Breast epithelium (tissue), 4 donors: ENCODE measurements at regions of chr13 and their contacts with region 1.

Region 1: DNA sequence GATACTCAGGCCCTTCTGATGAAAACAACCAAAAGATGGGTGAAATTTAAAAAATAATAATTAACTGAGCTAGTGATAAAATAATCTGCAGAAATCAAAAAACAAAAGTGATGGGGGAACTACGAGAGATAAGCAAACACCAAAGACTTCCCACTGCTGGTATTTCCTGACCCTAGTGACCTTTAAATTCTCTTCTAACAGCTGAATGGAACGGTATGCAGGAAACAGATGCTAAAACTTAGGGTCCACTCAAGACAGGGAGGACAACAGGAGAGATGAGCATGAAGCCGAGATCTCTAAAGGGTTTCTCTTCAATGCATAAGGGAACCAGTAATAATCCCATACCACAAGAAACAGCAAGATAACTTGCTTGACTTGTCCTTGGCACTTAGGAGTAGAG is 50.8 kb downstream of the USP12 start:
- DNase-seq: no peak
- H3K4me3 ChIP-seq: no peak overlapping the region
- H3K27ac ChIP-seq: peak overlapping the region in 1 of 2 donors; percentile 44
- H3K4me1 ChIP-seq: no peaks in the 10 kb centered on the region
- H3K27me3 ChIP-seq: no peaks in the 10 kb centered on the region
- CTCF ChIP-seq: no peak
- POLR2A ChIP-seq: no peak

Region 2: DNA sequence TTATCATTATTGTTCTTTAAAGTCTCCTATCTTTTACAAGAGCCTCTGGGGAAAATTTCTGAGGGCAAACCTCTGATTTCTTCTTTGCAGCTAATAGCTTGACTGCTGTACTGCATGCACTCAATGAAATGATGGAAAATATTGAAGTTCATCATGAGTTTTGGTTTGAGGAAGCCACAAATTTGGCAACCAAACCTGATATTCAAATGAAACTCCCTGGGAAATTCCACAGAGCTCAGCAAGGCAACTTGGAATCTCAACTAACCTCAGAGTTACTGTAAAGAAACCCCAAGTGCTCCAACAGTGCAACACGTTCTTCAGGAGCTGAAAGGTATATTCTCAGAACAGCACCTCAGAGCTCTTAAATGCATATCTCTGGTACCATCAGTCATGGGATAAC is 884.5 kb before region 1 on chr13:
- intact Hi-C with region 1: no loop called
- DNase-seq: no peak
- H3K4me3 ChIP-seq: no peak overlapping the region
- H3K27ac ChIP-seq: no peak overlapping the region
- H3K4me1 ChIP-seq: no peaks in the 10 kb centered on the region
- H3K27me3 ChIP-seq: no peaks in the 10 kb centered on the region
- CTCF ChIP-seq: no peak
- POLR2A ChIP-seq: no peak

Region 3: DNA sequence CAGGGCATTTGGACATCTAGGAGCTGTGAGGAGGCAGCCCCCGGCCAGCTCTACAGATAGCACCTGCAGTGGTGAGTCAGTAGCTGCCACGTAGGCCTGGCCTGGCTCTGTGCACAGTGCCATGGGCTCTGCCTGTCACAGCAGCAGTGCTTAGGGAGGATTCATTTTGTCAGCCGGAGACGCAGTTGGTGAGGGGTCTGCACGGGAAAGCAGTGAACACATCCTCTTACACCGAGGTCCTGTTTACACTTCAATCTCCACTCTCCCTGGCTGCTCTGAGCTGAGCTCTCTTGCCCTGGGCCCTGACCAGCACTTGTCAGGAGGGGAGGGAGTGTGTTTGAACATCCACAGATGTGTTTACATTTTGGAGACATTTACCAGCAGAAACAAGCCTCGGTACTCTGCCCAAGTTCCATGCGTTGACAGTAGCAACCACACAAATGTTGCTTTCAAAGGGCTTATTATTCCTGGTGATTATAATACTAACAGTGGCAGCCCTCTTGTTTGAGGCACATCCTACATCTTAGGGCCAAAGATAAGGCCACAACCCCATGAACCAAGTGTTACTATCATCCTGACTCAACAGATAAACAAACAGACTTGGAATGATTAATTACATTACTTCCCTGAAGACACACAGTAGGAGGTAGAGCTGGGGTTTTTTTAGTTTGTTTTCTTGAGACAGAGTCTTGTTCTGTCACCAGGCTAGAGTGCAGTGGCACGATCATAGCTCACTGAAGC is 98.1 kb before region 1 on chr13:
- intact Hi-C with region 1: no loop called
- DNase-seq: peak in 1 of 2 donors; percentile 60
- H3K4me3 ChIP-seq: no peak overlapping the region
- H3K27ac ChIP-seq: peak overlapping the region in 1 of 2 donors; percentile 36
- H3K4me1 ChIP-seq: no peaks in the 10 kb centered on the region
- H3K27me3 ChIP-seq: no peaks in the 10 kb centered on the region
- CTCF ChIP-seq: no peak
- POLR2A ChIP-seq: no peak

Region 4: DNA sequence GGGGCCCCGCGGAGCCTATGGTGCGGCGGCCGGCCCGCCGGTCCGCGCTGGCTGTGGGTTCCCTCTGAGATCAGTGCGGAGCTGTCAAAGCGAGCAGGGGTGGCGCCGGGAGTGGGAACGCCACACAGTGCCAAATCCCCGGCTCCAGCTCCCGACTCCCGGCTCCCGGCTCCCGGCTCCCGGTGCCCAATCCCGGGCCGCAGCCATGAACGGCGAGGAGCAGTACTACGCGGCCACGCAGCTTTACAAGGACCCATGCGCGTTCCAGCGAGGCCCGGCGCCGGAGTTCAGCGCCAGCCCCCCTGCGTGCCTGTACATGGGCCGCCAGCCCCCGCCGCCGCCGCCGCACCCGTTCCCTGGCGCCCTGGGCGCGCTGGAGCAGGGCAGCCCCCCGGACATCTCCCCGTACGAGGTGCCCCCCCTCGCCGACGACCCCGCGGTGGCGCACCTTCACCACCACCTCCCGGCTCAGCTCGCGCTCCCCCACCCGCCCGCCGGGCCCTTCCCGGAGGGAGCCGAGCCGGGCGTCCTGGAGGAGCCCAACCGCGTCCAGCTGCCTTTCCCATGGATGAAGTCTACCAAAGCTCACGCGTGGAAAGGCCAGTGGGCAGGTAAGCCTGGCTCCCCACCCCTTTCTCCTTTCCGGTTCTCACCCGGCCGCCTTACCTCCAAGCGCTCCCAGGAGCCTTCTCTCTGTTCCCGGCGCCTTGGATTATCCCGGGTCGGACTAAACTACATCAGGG is 799.3 kb after region 1 on chr13 and contains the start of gene PDX1:
- intact Hi-C with region 1: loop called (anchors 5 kb)
- DNase-seq: no peak
- H3K4me3 ChIP-seq: peak within 1 kb of the TSS; percentile 39 to 61 (median 42)
- H3K27ac ChIP-seq: no peak within 1 kb of the TSS
- H3K4me1 ChIP-seq: no peaks in the 10 kb centered on the region
- H3K27me3 ChIP-seq: peaks cover 6 to 100% of the 10 kb centered on the region in 2 donors
- CTCF ChIP-seq: no peak
- POLR2A ChIP-seq: no peak
- total RNA-seq, gene PDX1: not detected